Pancreas (tissue), 10 donors: ENCODE measurements at regions of chr17 and their contacts with region 1.

Region 1: DNA sequence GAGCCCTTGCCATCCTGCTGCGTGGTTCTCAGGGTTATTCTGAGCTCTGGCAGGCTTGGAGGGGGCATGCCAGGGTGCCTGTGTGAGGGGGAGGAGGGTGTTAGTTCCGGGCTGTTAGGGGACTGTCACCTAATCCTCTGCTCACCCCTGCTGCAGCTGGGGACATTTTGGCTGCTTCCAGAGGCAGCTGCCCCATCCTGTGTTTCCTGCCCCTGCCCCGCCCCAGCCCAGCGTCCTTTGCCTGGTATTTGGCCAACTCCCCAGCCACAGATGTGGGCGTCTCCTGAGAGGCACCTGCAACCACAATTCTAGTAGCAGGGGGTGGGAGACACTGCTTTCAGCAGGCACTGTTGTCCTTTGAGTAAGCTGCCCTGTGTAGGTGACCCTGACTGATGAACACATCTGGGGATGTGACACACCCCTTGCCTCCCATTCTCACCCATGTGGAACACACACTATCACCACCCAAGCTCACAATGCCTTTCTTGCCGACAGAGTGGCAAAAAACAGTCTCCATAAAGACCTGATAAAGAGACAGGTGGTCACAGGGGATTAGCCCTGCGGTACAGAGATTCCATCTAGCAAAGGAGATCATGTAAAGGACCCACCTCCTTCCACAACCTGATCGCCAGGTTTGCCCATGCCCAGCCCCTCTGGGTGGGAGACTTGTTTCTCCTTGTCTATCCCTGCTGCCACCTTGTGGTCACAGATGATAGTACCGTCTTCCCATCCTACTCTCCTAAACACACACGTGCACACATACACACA is at the start of gene CHRNE:
- DNase-seq: peak in 5 of 6 donors; percentile 72 to 84 (median 78)
- ATAC-seq: peak; percentile 55 to 69 (median 64)
- H3K4me3 ChIP-seq: no peak within 1 kb of the TSS
- H3K27ac ChIP-seq: peak within 1 kb of the TSS in 2 of 4 donors; percentile 28 to 74
- H3K4me1 ChIP-seq: peaks cover 0 to 9% (median 4%) of the 10 kb centered on the region in 3 donors
- H3K27me3 ChIP-seq: no peaks in the 10 kb centered on the region
- CTCF ChIP-seq: peak; percentile 70 to 75 (median 72)
- total RNA-seq, gene CHRNE: 0.76 to 2.0 (median 1.5) TPM

Region 2: DNA sequence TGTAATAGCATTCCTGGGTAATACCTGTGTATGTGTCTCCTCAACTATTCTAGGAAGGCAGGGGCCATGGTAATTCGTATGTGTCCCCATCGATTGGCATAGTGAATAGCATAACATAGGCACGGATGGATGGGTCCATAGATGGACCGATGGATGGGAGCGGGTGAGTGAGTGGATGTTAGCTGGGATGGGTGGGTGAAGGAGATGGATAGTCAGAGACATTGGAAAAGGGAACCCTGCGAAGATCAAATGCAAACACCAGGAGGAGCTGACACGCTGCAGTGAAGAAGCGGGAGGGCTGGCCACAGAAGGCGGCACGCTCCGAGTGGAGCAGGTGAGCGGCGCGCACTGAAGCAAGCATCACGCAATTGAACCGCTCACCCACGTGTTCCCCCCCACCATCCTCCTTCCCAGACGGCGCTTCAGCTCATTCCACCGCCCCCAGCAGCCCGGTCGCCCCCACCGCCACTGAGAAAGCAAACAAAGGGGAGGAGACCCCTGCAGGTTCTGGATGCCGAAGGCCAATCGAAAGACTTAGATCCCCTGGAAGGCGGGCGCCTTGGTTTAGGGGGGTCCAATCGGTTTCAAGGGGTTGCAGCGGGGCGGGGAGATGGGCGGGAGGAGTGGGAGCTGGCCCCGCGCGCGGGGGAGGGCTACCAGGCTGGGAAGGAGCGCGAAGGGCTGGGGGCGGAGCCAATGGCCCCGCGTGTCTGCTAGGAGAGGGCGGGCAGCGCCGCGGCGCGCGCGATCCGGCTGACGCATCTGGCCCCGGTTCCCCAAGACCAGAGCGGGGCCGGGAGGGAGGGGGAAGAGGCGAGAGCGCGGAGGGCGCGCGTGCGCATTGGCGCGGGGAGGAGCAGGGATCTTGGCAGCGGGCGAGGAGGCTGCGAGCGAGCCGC is 193.2 kb before region 1 on chr17 and contains the start of gene ARRB2:
- intact Hi-C with region 1: loop called in 1 of 3 experiments (anchors 10 kb)
- DNase-seq: peak; percentile 97 to 99 (median 98)
- ATAC-seq: peak; percentile 85 to 92 (median 90)
- H3K4me3 ChIP-seq: peak within 1 kb of the TSS; percentile 11 to 70 (median 44)
- H3K27ac ChIP-seq: peak within 1 kb of the TSS; percentile 47 to 85 (median 72)
- H3K4me1 ChIP-seq: peaks cover 0 to 6% (median 0%) of the 10 kb centered on the region in 3 donors
- H3K27me3 ChIP-seq: no peaks in the 10 kb centered on the region
- CTCF ChIP-seq: peak; percentile 22 to 49 (median 38)
- total RNA-seq, gene ARRB2: 11.2 to 49.6 (median 15.1) TPM

Region 3: DNA sequence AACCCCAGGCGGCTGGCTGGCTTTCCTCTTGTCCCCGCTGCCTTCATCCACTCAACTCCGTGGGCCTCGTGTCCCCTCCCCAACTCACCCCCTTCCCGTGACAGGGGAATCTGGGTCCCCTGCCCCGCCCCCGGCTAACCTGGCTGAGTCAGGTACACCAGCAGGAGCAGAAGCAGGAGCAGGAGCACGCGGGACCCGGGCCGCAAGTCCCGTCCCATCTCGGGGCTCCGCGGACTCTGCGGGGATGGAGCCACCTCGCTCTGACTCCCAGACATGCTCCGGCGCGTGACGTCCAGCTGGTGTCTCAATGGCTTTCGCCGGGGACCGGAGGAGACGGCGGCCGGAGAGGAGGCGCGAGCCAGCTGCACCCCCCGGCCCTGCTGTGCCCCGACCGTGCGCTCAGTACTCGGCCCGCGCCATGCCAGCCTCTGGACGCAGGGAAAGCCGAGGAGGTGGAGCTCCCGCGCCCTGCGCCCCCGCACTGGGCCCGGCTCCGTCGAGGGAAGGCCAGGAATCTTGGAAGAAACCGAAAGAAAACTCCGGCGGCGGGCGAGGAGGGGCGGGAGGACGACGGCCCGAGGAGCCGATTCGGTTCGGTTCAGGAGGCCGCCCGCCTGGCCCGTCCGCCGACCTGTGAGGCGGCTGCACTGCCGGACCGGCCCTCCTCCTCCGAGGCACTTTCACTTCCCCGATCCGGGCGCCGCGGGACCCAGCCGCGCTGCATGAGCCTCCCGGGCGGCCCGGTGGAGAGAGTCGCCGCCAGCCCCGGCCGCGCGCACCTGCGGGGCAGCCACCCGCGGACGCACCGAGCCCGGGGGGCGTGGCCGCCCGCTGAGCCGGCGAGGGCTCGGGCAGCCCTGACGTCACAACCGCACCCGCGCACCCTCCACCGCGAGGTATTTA is 163.9 kb before region 1 on chr17 and contains the starts of genes CXCL16 and ZMYND15:
- intact Hi-C with region 1: loop called in 1 of 3 experiments (anchors 10 kb)
- DNase-seq: peak in 5 of 6 donors; percentile 44 to 85 (median 71)
- ATAC-seq: peak; percentile 74 to 81 (median 79)
- H3K4me3 ChIP-seq: peak within 1 kb of the TSS; percentile 65 to 89 (median 80)
- H3K27ac ChIP-seq: peak within 1 kb of the TSS; percentile 50 to 77 (median 69)
- H3K4me1 ChIP-seq: peaks cover 0 to 6% (median 0%) of the 10 kb centered on the region in 3 donors
- H3K27me3 ChIP-seq: no peaks in the 10 kb centered on the region
- CTCF ChIP-seq: no peak
- total RNA-seq, gene CXCL16: 7.6 to 55.6 (median 10.0) TPM
- total RNA-seq, gene ZMYND15: 0.39 to 3.2 (median 0.69) TPM

Region 4: DNA sequence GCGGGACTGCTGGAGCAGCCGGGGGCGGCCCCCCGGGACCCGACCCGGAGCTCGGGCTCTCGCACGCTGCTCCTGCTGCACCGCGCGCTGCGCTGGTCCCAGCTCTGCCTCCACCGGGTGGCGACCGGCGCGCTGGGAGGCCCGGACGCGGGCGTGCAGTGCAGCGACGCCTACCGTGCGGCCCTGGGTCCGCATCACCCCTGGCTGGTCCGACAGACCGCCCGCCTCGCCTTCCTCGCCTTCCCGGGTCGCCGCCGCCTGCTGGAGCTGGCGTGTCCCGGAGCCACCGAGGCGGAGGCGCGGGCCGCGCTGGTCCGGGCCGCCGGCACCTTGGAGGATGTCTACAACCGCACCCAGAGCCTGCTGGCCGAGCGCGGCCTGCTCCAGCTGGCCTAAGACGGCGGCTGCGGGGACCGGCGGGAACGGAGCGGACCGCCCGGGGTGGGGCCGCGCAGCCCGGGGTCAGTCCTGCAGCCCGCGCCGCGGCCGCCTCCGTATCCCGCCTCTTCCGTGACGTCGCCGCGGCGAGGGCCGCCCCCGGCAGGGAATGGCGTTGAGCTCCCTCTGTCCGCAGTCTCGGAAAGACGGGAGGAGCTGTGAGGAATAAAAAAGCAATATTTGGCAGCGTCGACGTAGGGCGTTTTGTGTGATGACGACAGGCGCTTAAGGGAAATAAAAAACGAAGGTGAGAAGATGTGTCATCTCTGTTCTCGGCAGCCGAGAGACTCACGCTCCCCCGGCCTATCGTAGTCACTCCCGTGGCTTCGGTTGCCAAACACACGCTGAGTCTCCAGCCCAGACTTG is 113.1 kb before region 1 on chr17:
- intact Hi-C with region 1: loop called in 1 of 3 experiments (anchors 10 kb)
- DNase-seq: peak; percentile 82 to 94 (median 88)
- ATAC-seq: peak; percentile 88 to 92 (median 92)
- H3K4me3 ChIP-seq: peak overlapping the region; percentile 53 to 71 (median 58)
- H3K27ac ChIP-seq: peak overlapping the region; percentile 93 to 98 (median 98)
- H3K4me1 ChIP-seq: peaks cover 0 to 20% (median 4%) of the 10 kb centered on the region in 3 donors
- H3K27me3 ChIP-seq: no peaks in the 10 kb centered on the region
- CTCF ChIP-seq: peak; percentile 58 to 80 (median 74)

Region 5: DNA sequence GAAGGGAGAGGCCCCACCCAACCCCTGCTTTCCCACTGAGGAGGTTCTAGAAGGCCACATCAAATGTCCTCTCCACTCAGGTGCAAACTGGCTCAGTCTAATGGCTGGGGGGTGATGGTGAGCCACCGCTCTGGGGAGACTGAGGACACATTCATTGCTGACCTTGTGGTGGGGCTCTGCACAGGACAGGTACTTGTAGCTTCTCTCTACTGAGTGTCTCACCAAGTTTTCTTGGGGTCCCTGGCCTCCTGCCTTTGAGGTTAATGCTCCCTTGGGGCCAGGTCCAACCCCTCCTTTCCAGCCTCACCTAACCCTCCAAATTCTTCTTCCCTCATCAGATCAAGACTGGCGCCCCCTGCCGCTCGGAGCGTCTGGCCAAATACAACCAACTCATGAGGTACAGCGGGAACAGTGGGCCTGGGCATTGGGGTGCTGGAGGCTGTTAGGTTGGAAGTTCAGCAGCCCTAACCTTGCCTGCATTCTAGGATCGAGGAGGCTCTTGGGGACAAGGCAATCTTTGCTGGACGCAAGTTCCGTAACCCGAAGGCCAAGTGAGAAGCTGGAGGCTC is 53.3 kb after region 1 on chr17:
- intact Hi-C with region 1: no loop called
- DNase-seq: peak in 3 of 6 donors; percentile 27 to 79 (median 67)
- ATAC-seq: peak in 2 of 4 donors; percentile 50 to 51
- H3K4me3 ChIP-seq: no peak overlapping the region
- H3K27ac ChIP-seq: no peak overlapping the region
- H3K4me1 ChIP-seq: no peaks in the 10 kb centered on the region
- H3K27me3 ChIP-seq: no peaks in the 10 kb centered on the region
- CTCF ChIP-seq: peak in 2 of 4 donors; percentile 12 to 18

Region 6: GRCh38 chr17:5065227-5065744 is 162.1 kb after region 1 on chr17:
- intact Hi-C with region 1: loop called in 1 of 3 experiments (anchors 10 kb)
- DNase-seq: no peak
- ATAC-seq: no peak
- H3K4me3 ChIP-seq: no peak overlapping the region
- H3K27ac ChIP-seq: no peak overlapping the region
- H3K4me1 ChIP-seq: no peaks in the 10 kb centered on the region
- H3K27me3 ChIP-seq: no peaks in the 10 kb centered on the region
- CTCF ChIP-seq: no peak